Activated B cell treated with CpG ODN at 0.5 μM for 24 hours (primary cell): ENCODE measurements at regions of chr12 and their contacts with region 1.

Region 1: GRCh38 chr12:120669055-120669840 is 17.7 kb upstream of the MLEC start:
- DNase-seq: peak; percentile 43
- ATAC-seq: peak; percentile 79
- H3K4me3 Mint-ChIP-seq: peak overlapping the region; percentile 74
- H3K27ac Mint-ChIP-seq: peak overlapping the region; percentile 89
- H3K4me1 Mint-ChIP-seq: peaks cover 80% of the 10 kb centered on the region
- H3K27me3 Mint-ChIP-seq: peaks cover 5% of the 10 kb centered on the region
- CTCF ChIP-seq: no peak

Region 2: DNA sequence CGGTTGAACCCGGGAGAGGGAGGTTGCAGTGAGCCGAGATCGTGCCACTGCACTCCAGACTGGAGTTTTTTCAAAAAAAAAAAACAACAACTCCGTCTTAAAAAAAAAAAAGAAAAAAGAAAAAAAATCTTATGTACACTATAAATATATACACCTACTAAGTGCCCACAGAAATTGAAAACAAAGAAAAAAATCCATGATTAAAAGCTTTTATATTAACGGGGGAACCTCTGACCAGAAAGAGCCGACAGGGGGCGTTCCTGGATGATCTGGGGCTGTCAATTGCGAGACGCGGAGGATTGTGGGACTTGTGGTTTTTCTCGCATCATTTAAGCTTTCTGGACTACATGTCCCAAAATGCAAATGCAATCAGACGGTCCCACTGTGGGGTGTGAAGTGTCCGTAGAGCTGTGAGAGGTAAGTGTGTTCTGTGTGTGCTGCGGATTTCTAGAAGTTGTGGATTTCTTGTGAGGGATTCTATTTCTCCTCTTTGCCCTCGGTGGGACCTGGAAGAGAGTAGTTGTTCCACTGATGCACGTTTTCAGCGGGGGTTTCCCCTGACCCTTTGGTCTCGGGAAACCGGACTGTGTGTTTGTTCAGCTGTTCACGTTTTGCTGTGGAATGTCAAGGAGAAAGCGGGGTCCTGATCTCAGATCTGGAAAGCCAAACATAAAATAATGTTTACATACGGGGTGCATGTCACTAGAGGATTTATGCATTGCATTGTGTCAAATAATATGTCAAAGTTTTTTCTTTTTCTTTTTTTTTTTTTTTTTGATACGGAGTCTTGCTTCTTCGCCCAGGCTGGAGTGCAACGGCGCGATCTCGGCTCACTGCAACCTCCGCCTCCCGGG is 367.1 kb before region 1 on chr12 and contains the start of gene SIRT4:
- CTCF ChIA-PET with region 1: no interaction called
- POLR2A ChIA-PET with region 1: interaction called, 15 read pairs
- intact Hi-C with region 1: no loop called
- DNase-seq: peak; percentile 71
- ATAC-seq: peak; percentile 99
- H3K4me3 Mint-ChIP-seq: peak within 1 kb of the TSS; percentile 95
- H3K27ac Mint-ChIP-seq: peak within 1 kb of the TSS; percentile 86
- H3K4me1 Mint-ChIP-seq: peaks cover 8% of the 10 kb centered on the region
- H3K27me3 Mint-ChIP-seq: no peaks in the 10 kb centered on the region
- CTCF ChIP-seq: no peak
- total RNA-seq, gene SIRT4: 1.6 and 1.7 TPM in 2 replicates

Region 3: GRCh38 chr12:120554678-120555077 is 114.6 kb before region 1 on chr12:
- CTCF ChIA-PET with region 1: no interaction called
- POLR2A ChIA-PET with region 1: no interaction called
- intact Hi-C with region 1: no loop called
- DNase-seq: no peak
- ATAC-seq: no peak
- H3K4me3 Mint-ChIP-seq: no peak overlapping the region
- H3K27ac Mint-ChIP-seq: no peak overlapping the region
- H3K4me1 Mint-ChIP-seq: peaks cover 4% of the 10 kb centered on the region
- H3K27me3 Mint-ChIP-seq: no peaks in the 10 kb centered on the region
- CTCF ChIP-seq: no peak

Region 4: GRCh38 chr12:122235741-122236140 is 1566.5 kb after region 1 on chr12:
- CTCF ChIA-PET with region 1: no interaction called
- POLR2A ChIA-PET with region 1: no interaction called
- intact Hi-C with region 1: no loop called
- DNase-seq: no peak
- ATAC-seq: no peak
- H3K4me3 Mint-ChIP-seq: no peak overlapping the region
- H3K27ac Mint-ChIP-seq: no peak overlapping the region
- H3K4me1 Mint-ChIP-seq: no peaks in the 10 kb centered on the region
- H3K27me3 Mint-ChIP-seq: no peaks in the 10 kb centered on the region
- CTCF ChIP-seq: no peak